T-cell (primary cell): ENCODE measurements at regions of chr9 and their contacts with region 1.

Region 1: DNA sequence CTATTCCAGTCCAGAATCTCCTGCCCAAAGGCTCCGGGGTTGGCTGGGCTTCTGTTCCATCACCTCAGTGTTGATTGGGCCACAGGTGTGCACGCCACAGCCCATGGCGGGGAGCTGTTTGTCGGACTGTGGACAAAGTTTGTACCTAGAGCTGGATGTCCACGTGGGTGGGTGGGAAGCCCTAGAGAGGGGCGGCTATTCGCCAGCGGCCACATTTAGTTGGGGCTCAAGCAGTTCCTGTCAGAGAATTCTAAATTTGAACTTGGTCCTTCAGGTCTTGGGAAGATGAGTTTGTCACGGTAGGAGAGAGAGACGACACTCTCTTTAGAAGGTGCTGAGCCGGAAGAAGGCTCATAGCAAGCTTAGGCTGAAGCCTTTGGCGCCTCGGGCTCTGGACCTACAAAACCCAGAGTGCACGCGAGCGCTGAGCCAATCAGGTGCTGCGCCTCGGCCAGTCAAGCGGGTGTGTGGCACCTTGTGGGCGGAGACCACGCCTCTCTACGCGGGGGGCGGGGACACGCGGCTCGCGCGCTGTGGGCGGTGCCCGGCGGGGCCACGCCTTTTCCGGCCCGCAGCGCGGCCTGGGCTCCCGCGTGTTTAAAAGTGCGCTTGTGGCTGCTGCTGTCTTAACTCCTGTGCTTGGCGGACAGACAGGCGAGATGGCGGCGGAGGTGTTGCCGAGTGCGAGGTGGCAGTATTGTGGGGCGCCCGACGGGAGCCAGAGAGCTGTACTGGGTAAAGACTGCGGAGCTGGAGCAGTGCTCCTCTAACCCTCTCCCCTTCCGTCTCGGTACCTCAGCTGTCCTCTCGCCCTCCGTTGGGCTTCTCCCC is at the start of gene POLR1E:
- DNase-seq: peak; percentile 88 to 98 (median 94)
- ATAC-seq: peak; percentile 97 to 99 (median 99)
- H3K4me3 ChIP-seq: peak within 1 kb of the TSS; percentile 83 to 93
- H3K4me3 Mint-ChIP-seq: peak within 1 kb of the TSS; percentile 89 to 97 (median 95)
- H3K27ac ChIP-seq: peak within 1 kb of the TSS; percentile 66
- H3K27ac Mint-ChIP-seq: peak within 1 kb of the TSS; percentile 84 to 97
- H3K4me1 ChIP-seq: peaks cover 9 to 32% of the 10 kb centered on the region in 2 experiments
- H3K4me1 Mint-ChIP-seq: peaks cover 36 to 46% (median 40%) of the 10 kb centered on the region in 3 donors
- H3K27me3 ChIP-seq: peaks cover 0 to 8% of the 10 kb centered on the region in 2 experiments
- H3K27me3 Mint-ChIP-seq: peaks cover 6 to 7% of the 10 kb centered on the region in 2 donors
- total RNA-seq, gene POLR1E: 31.5 to 37.4 (median 35.0) TPM

Region 2: GRCh38 chr9:37465249-37466036 is 20.2 kb before region 1 on chr9 and contains the start of gene ZBTB5:
- CTCF ChIA-PET with region 1: interaction called, 3 to 8 read pairs
- POLR2A ChIA-PET with region 1: interaction called, 3 to 10 read pairs
- DNase-seq: peak; percentile 93 to 99 (median 99)
- ATAC-seq: peak; percentile 81 to 87 (median 84)
- H3K4me3 ChIP-seq: peak within 1 kb of the TSS; percentile 93 to 96
- H3K4me3 Mint-ChIP-seq: peak within 1 kb of the TSS; percentile 91 to 96 (median 94)
- H3K27ac ChIP-seq: peak within 1 kb of the TSS; percentile 97
- H3K27ac Mint-ChIP-seq: peak within 1 kb of the TSS; percentile 91 to 93
- H3K4me1 ChIP-seq: peaks cover 13 to 21% of the 10 kb centered on the region in 2 experiments
- H3K4me1 Mint-ChIP-seq: peaks cover 35 to 42% (median 38%) of the 10 kb centered on the region in 3 donors
- H3K27me3 ChIP-seq: peaks cover 0 to 3% of the 10 kb centered on the region in 2 experiments
- H3K27me3 Mint-ChIP-seq: no peaks in the 10 kb centered on the region
- total RNA-seq, gene ZBTB5: 12.5 to 14.3 (median 13.3) TPM

Region 3: DNA sequence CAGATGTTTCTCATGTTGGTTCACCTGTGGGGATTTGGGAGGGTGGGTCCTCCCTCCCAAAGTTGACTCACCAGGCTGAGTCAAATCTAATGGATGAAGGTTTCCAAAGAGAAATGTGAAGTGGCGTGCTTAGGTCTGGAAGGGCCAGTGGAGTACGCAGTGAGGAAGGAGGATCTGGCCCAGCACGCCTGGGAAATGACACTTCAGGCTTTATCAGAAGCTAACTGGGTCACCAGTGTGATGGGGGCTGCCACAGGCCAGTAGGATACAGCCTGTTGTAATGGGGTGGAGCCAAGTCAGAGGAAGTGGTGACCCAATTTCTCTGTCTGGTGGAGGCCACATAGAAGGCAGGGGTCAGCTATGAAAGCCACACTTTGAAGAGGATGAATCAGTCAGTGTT is 18.1 kb after region 1 on chr9:
- CTCF ChIA-PET with region 1: interaction called, 3 to 11 read pairs
- POLR2A ChIA-PET with region 1: interaction called in 1 of 2 experiments, 4 read pairs
- DNase-seq: peak in 33 of 35 experiments; percentile 10 to 64 (median 34)
- ATAC-seq: peak; percentile 56 to 88 (median 77)
- H3K4me3 ChIP-seq: peak overlapping the region in 1 of 2 donors; percentile 25
- H3K4me3 Mint-ChIP-seq: peak overlapping the region in 2 of 3 donors; percentile 63 to 77
- H3K27ac ChIP-seq: peak overlapping the region; percentile 74
- H3K27ac Mint-ChIP-seq: peak overlapping the region; percentile 71 to 92
- H3K4me1 ChIP-seq: peaks cover 0 to 24% of the 10 kb centered on the region in 2 experiments
- H3K4me1 Mint-ChIP-seq: peaks cover 19 to 41% (median 21%) of the 10 kb centered on the region in 3 donors
- H3K27me3 ChIP-seq: no peaks in the 10 kb centered on the region
- H3K27me3 Mint-ChIP-seq: no peaks in the 10 kb centered on the region